ENCODE measurements at regions of chr6 and their contacts with region 1.

Region 1: DNA sequence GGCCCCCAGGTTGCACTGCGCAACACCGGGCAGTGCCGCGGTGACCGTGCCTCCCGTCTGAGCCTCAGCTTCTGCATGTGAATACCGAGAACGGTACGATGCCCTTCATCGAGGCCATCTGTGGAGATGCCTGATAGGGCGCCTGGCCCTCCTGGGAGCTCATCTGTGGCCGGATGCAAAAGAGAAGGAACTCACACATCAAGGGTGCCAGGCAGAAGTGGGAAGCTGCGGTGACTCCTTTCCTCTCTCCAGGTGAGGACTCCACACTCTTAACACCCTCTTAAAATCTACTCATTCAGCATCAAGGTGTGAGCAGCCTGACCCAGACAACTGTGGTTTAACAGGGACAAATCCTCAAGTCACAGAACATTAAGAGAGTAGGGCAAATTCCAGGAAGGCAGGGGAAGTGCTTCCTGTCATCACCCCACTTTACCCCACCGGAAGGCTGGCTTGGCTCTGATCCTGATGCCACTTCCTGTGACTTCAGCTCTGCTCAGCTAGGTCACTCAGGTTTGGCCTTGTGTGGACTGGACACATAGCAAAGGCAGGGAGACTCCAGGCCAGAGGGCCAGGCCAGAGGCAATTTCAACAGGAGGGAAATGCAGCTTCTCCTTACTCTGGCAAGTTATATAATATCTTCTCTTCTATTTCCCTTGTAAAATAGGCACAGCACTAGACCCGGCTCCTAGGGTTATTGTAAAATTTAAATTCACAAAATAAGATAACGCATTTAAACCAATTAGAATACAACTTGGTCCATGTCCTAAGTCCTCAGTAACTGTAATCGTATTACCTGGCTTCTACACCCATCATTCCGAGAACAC is 69.4 kb downstream of the CPNE5 start:
- DNase-seq: no peak
- H3K4me3 ChIP-seq: no peak overlapping the region
- CTCF ChIP-seq: no peak
- POLR2A ChIP-seq: no peak

Region 2: GRCh38 chr6:36682328-36683144 is 87.4 kb before region 1 on chr6:
- intact Hi-C with region 1: no loop called
- DNase-seq: peak; percentile 85 to 96
- H3K4me3 ChIP-seq: no peak overlapping the region
- CTCF ChIP-seq: no peak
- POLR2A ChIP-seq: no peak

Region 3: GRCh38 chr6:36715474-36715873 is 54.4 kb before region 1 on chr6:
- intact Hi-C with region 1: no loop called
- DNase-seq: peak in 1 of 2 donors; percentile 70
- H3K4me3 ChIP-seq: no peak overlapping the region
- CTCF ChIP-seq: no peak
- POLR2A ChIP-seq: no peak

Region 4: DNA sequence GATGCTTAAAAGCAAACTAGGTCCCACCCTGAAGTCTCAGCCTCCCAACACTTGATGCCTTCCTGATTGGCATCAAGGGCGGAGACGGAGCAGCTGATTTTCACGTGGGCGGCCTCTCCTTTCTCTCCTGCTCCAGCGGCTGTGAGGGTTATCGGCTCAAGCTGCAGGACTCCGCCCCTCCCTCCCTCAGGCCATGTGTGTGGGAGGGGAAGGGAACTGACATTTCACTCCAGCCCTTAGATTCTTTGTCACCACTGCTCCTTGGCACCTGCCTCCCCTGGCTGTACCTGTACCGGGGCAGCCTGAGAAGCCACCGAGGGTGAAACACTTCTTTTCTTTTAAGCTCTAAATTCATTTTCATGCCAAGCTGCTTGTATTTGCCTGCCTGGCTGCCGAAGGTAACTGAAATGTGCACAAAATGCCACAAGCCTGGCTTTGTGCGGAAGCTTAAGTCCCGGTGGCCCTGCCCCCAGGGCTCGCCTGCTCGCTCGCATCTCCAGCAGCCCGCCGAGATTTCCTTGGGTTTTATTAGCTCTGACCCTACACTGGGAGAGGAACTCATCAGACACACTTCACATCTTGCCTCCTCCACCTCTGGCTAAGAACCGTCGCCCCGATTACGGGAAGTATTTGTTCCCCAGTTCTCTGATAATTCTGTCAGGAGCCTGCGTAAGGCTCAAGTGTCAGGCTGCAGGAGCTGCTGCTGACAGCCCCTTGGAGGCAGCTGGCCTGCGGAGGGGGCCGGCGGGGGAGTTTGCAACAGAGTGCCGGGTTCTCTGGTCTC is 79.0 kb after region 1 on chr6:
- intact Hi-C with region 1: loop called (anchors 5 kb)
- DNase-seq: no peak
- H3K4me3 ChIP-seq: no peak overlapping the region
- CTCF ChIP-seq: no peak
- POLR2A ChIP-seq: no peak

Region 5: GRCh38 chr6:36947570-36948351 is 177.9 kb after region 1 on chr6:
- intact Hi-C with region 1: no loop called
- DNase-seq: peak in 1 of 2 donors; percentile 76
- H3K4me3 ChIP-seq: no peak overlapping the region
- CTCF ChIP-seq: no peak
- POLR2A ChIP-seq: no peak

Region 6: GRCh38 chr6:37018198-37019064 is 248.5 kb after region 1 on chr6:
- intact Hi-C with region 1: loop called (anchors 5 kb)
- DNase-seq: peak; percentile 90 to 98
- H3K4me3 ChIP-seq: no peak overlapping the region
- CTCF ChIP-seq: peak in 1 of 3 donors; percentile 97
- POLR2A ChIP-seq: no peak

Region 7: DNA sequence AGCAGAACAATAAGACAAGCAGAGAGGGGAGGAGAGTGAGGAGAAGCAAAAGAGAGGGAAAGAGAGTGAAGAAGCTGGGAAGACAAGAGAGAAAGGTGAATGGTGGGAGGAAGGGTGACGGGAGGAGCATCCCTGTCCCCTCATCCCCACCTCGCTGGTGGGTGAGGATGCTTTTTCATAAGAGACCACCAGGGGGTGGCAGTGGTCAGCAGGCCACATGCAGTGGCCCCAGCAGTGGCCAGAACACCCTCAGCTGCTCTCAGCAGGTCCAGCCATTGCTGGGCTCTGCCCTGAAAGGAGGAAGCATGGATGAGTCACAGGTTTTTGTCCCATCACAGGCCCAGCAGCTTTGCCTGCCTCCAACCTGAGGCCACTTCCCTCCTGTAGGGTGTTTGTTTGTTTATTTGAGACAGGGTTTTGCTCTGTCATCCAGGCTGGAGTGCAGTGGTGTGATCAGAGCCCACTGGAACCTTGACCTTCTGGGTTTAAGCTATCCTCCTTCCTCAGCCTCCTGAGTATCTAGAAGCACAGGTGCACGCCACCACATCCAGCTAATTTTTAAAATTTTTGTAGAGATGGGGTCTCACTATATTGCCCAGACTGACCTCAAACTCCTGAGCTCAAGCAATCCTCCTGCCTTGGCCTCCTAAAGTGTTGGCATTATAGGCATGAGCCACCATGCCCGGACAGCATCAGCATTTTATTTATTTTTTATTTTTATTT is 259.5 kb after region 1 on chr6:
- intact Hi-C with region 1: no loop called
- DNase-seq: peak in 1 of 2 donors; percentile 59
- H3K4me3 ChIP-seq: no peak overlapping the region
- CTCF ChIP-seq: peak in 1 of 3 donors; percentile 54
- POLR2A ChIP-seq: no peak